HCT116 (cell line): ENCODE measurements at regions of chr15 and their contacts with region 1.

Region 1: DNA sequence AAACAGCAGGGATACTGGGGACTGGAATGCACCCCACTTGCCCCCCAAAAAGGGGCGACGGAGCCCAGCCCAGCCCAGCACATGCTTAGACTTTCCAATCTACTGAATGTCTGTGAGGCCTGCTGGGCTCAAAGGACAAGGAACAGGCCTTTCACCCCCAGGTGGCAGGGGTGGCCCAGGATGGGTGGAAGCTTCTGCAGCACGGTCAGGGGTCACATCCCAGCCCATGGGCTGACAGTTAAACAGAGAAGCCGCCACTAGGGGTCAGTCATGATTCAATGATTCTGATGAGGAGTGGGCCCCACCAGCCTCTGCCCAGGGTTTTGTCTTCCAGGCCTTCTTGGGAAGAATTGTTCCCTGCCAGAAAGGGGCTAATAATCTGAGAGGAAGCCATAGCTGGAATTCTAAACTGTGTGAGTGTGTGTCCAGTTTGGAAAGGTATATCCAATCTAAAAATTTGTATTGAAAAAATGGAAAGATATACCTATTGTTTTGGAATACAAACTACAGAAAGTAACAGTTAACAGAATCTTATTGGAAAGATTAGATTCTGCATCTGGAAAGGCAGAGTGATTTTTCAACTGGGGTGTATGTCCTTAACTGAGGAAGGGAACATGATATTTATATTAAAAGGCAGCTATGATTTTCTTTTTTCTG is 2.2 kb downstream of the CHRNB4 start:
- DNase-seq: peak; percentile 31
- ATAC-seq: peak; percentile 79
- H3K4me3 ChIP-seq: no peak overlapping the region
- H3K27ac ChIP-seq: no peak overlapping the region
- H3K4me1 ChIP-seq: peaks cover 2 to 15% of the 10 kb centered on the region in 2 experiments; a peak in 2 of 4 replicates
- H3K27me3 ChIP-seq: no peaks in the 10 kb centered on the region
- CTCF ChIP-seq: peak; percentile 70 to 75 (median 70); a peak in 5 of 6 replicates
- POLR2A ChIP-seq: no peak
- RAD21 ChIP-seq: peak; percentile 80

Region 2: GRCh38 chr15:78709263-78709882 is 70.6 kb after region 1 on chr15:
- CTCF ChIA-PET with region 1: interaction called, 19 read pairs
- POLR2A ChIA-PET with region 1: no interaction called
- RAD21 ChIA-PET with region 1: interaction called, 3 to 4 read pairs
- intact Hi-C with region 1: loop called (anchors 1 kb)
- DNase-seq: peak; percentile 36
- ATAC-seq: peak; percentile 99
- H3K4me3 ChIP-seq: peak overlapping the region in 1 of 2 experiments; percentile 20; a peak in 1 of 4 replicates
- H3K27ac ChIP-seq: no peak overlapping the region
- H3K4me1 ChIP-seq: peaks cover 2 to 9% of the 10 kb centered on the region in 2 experiments; a peak in 2 of 4 replicates
- H3K27me3 ChIP-seq: no peaks in the 10 kb centered on the region
- CTCF ChIP-seq: peak; percentile 85 to 92 (median 87)
- POLR2A ChIP-seq: no peak
- RAD21 ChIP-seq: peak; percentile 95

Region 3: DNA sequence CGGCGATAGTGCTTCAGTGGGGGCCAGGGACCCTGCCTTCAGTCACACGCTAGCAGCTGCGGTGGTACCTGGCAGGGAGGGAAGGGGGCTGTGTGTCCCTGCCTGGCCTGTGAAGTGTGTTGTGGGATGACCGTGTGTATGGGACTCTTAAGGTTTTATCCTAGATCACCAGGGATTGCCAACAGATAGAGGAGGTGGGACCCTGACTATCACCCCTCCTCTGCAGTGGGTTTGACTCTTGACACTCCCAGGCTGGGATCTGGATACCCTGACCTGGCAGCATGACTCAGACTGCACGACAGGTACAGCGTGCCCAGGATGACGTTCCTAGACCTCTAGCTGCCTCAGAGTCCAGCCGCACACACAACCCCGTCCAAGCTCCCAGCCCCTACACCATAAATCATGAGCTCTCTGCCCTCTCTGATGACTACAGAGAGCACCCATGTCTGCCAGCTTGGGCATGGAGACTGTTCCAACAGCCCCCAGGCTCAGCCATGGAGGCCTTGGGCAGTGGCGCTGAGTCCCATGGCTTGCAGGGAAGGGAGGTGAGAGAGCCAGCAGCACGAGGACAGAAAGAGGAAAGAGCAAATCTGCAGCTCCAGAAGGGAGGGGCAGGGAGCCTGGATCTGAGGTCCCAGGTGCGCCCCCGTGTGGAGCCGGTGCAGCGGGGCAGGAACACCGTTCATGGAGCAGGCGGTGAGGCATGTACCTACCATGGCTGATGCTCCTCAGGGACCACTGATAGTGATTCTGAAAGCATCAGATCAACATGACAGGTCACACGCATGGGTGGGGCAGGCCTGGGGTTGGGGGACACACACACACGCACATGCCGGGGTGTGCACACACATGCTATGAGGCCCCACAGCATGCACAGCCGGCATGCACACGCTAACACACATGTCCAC is 101.5 kb after region 1 on chr15:
- CTCF ChIA-PET with region 1: interaction called, 12 read pairs
- POLR2A ChIA-PET with region 1: no interaction called
- RAD21 ChIA-PET with region 1: no interaction called
- intact Hi-C with region 1: no loop called
- DNase-seq: peak; percentile 45
- ATAC-seq: peak; percentile 80
- H3K4me3 ChIP-seq: no peak overlapping the region
- H3K27ac ChIP-seq: no peak overlapping the region
- H3K4me1 ChIP-seq: peaks cover 0 to 13% of the 10 kb centered on the region in 2 experiments; a peak in 2 of 4 replicates
- H3K27me3 ChIP-seq: no peaks in the 10 kb centered on the region
- CTCF ChIP-seq: peak; percentile 52 to 85 (median 75); a peak in 5 of 6 replicates
- POLR2A ChIP-seq: no peak
- RAD21 ChIP-seq: peak; percentile 54

Region 4: DNA sequence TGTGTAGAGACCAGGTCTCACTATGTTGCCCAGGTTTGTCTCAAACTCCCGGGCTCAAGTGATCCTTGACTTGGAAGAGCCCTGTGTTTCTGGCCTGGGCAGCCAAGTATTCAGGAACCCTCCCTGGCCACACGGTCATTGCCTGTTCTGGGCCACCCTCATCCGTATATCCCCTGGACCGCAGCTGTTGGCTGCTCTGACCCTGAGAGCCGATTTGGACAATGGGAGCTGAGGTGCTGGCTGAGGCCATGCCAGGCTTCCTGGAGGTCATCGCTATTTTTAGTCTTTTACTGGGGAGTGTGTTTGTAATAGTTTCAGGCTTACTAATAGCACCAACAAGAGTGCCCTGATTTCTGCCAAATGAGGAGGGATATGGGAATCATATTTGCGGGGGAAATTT is 111.8 kb after region 1 on chr15:
- CTCF ChIA-PET with region 1: interaction called, 5 read pairs
- POLR2A ChIA-PET with region 1: no interaction called
- RAD21 ChIA-PET with region 1: no interaction called
- intact Hi-C with region 1: loop called (anchors 1 kb)
- DNase-seq: no peak
- ATAC-seq: peak; percentile 24
- H3K4me3 ChIP-seq: peak overlapping the region in 1 of 2 experiments; percentile 30; a peak in 1 of 4 replicates
- H3K27ac ChIP-seq: no peak overlapping the region
- H3K4me1 ChIP-seq: peaks cover 0 to 6% of the 10 kb centered on the region in 2 experiments; a peak in 1 of 4 replicates
- H3K27me3 ChIP-seq: no peaks in the 10 kb centered on the region
- CTCF ChIP-seq: no peak
- POLR2A ChIP-seq: no peak
- RAD21 ChIP-seq: no peak

Region 5: GRCh38 chr15:79240036-79240435 is 601.2 kb after region 1 on chr15:
- CTCF ChIA-PET with region 1: no interaction called
- POLR2A ChIA-PET with region 1: no interaction called
- RAD21 ChIA-PET with region 1: no interaction called
- intact Hi-C with region 1: no loop called
- DNase-seq: no peak
- ATAC-seq: no peak
- H3K4me3 ChIP-seq: no peak overlapping the region
- H3K27ac ChIP-seq: no peak overlapping the region
- H3K4me1 ChIP-seq: no peaks in the 10 kb centered on the region
- H3K27me3 ChIP-seq: peaks cover 36% of the 10 kb centered on the region
- CTCF ChIP-seq: no peak
- POLR2A ChIP-seq: no peak
- RAD21 ChIP-seq: no peak